Activated B cell treated with CpG ODN at 0.5 μM for 24 hours (primary cell): ENCODE measurements at regions of chr4 and their contacts with region 1.

Region 1: GRCh38 chr4:26319467-26319948 is 1.3 kb upstream of the RBPJ start:
- DNase-seq: peak; percentile 88
- ATAC-seq: peak; percentile 72
- H3K4me3 Mint-ChIP-seq: peak overlapping the region; percentile 99
- H3K27ac Mint-ChIP-seq: peak overlapping the region; percentile 99
- H3K4me1 Mint-ChIP-seq: peaks cover 35% of the 10 kb centered on the region
- H3K27me3 Mint-ChIP-seq: no peaks in the 10 kb centered on the region
- CTCF ChIP-seq: no peak

Region 2: GRCh38 chr4:24519649-24520048 is 1799.9 kb before region 1 on chr4:
- CTCF ChIA-PET with region 1: no interaction called
- POLR2A ChIA-PET with region 1: no interaction called
- intact Hi-C with region 1: no loop called
- DNase-seq: no peak
- ATAC-seq: no peak
- H3K4me3 Mint-ChIP-seq: no peak overlapping the region
- H3K27ac Mint-ChIP-seq: no peak overlapping the region
- H3K4me1 Mint-ChIP-seq: no peaks in the 10 kb centered on the region
- H3K27me3 Mint-ChIP-seq: no peaks in the 10 kb centered on the region
- CTCF ChIP-seq: no peak

Region 3: DNA sequence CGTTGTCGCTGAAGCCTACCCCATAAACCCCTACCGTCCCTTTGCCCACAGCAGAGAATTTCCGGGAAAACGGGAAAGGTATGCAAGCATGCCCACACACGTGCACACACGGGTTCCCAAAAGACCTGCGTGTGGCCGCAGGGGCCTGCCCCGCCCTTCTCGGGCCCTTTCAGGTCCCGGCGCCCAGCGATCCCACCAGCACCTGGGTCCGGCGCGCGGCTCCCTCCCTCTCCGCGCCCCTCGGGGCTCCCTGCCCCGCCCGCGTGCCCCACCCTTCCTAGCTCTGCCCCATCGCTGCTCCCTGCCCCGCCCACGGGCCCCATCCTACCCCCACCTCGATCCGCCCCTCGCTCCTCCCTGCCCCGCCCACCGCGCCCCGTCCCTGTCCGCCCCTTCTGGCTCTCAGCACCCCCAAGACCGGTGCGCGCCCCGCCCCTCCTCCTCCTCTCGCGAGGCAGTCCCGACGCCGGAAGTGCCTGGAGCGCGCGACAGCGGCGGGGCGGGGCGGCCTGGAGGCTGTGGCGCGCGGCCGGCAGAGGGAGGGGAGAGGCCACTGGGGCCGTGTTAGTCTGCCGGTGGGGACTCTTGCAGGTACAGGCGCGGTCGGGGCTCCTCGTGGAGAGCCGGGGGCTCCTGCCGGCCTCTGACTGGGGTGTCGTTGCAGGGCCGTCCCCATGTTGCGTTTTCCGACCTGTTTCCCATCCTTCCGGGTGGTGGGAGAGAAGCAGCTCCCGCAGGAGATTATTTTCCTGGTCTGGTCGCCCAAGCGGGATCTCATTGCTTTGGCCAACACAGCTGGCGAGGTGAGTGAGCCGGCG is 942.5 kb before region 1 on chr4 and contains the start of gene ANAPC4:
- CTCF ChIA-PET with region 1: no interaction called
- POLR2A ChIA-PET with region 1: no interaction called
- intact Hi-C with region 1: loop called (anchors 2 kb)
- DNase-seq: peak; percentile 95
- ATAC-seq: peak; percentile 94
- H3K4me3 Mint-ChIP-seq: no peak within 1 kb of the TSS
- H3K27ac Mint-ChIP-seq: peak within 1 kb of the TSS; percentile 81
- H3K4me1 Mint-ChIP-seq: peaks cover 5% of the 10 kb centered on the region
- H3K27me3 Mint-ChIP-seq: no peaks in the 10 kb centered on the region
- CTCF ChIP-seq: no peak
- total RNA-seq, gene ANAPC4: 36.8 and 37.0 TPM in 2 replicates

Region 4: GRCh38 chr4:25723409-25723808 is 596.1 kb before region 1 on chr4:
- CTCF ChIA-PET with region 1: no interaction called
- POLR2A ChIA-PET with region 1: no interaction called
- intact Hi-C with region 1: no loop called
- DNase-seq: no peak
- ATAC-seq: no peak
- H3K4me3 Mint-ChIP-seq: no peak overlapping the region
- H3K27ac Mint-ChIP-seq: no peak overlapping the region
- H3K4me1 Mint-ChIP-seq: peaks cover 13% of the 10 kb centered on the region
- H3K27me3 Mint-ChIP-seq: no peaks in the 10 kb centered on the region
- CTCF ChIP-seq: no peak

Region 5: DNA sequence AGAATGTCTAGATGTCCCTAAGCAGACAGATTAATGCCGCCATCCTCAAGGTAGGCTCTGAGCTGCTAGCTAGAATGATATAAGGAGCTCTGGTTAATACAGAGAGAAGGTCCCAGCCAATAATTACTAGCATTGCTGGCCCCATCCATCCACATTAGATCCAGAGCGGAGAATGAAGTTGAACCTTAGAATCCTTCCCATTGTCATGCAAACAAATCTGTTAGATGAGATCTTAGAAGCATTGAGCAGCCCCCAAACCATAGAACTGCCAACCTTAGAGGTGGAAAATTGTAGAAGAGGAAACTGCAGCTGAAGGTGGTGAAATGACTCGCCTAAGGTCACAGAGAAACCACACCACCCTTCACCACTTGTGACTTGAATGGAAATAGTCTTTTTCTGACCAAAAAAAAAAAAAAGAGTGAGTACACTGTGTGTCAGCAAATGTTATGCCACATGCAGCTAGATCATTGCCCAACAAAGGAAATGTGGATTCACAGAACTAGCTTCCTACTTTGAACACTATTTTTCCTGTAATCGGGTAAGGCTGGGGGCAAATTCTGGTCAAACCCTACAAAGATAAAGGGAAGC is 243.4 kb before region 1 on chr4:
- CTCF ChIA-PET with region 1: interaction called, 3 read pairs
- POLR2A ChIA-PET with region 1: interaction called, 4 read pairs
- intact Hi-C with region 1: loop called (anchors 1 kb)
- DNase-seq: no peak
- ATAC-seq: peak; percentile 54
- H3K4me3 Mint-ChIP-seq: no peak overlapping the region
- H3K27ac Mint-ChIP-seq: peak overlapping the region; percentile 57
- H3K4me1 Mint-ChIP-seq: peaks cover 30% of the 10 kb centered on the region
- H3K27me3 Mint-ChIP-seq: no peaks in the 10 kb centered on the region
- CTCF ChIP-seq: no peak

Region 6: GRCh38 chr4:26217961-26218676 is 101.4 kb before region 1 on chr4:
- CTCF ChIA-PET with region 1: no interaction called
- POLR2A ChIA-PET with region 1: no interaction called
- intact Hi-C with region 1: loop called (anchors 2 kb)
- DNase-seq: no peak
- ATAC-seq: peak; percentile 79
- H3K4me3 Mint-ChIP-seq: peak overlapping the region; percentile 36
- H3K27ac Mint-ChIP-seq: peak overlapping the region; percentile 55
- H3K4me1 Mint-ChIP-seq: peaks cover 17% of the 10 kb centered on the region
- H3K27me3 Mint-ChIP-seq: peaks cover 9% of the 10 kb centered on the region
- CTCF ChIP-seq: no peak

Region 7: GRCh38 chr4:26583865-26584652 is 264.6 kb after region 1 on chr4 and contains the start of gene TBC1D19:
- CTCF ChIA-PET with region 1: no interaction called
- POLR2A ChIA-PET with region 1: interaction called, 10 read pairs
- intact Hi-C with region 1: loop called (anchors 2 kb)
- DNase-seq: peak; percentile 82
- ATAC-seq: peak; percentile 96
- H3K4me3 Mint-ChIP-seq: peak within 1 kb of the TSS; percentile 96
- H3K27ac Mint-ChIP-seq: peak within 1 kb of the TSS; percentile 93
- H3K4me1 Mint-ChIP-seq: peaks cover 24% of the 10 kb centered on the region
- H3K27me3 Mint-ChIP-seq: peaks cover under 1% of the 10 kb centered on the region
- CTCF ChIP-seq: no peak
- total RNA-seq, gene TBC1D19: 5.2 and 6.7 TPM in 2 replicates

Region 8: GRCh38 chr4:26992657-26993361 is 673.3 kb after region 1 on chr4:
- CTCF ChIA-PET with region 1: no interaction called
- POLR2A ChIA-PET with region 1: no interaction called
- intact Hi-C with region 1: loop called (anchors 1 kb)
- DNase-seq: peak; percentile 26
- ATAC-seq: peak; percentile 80
- H3K4me3 Mint-ChIP-seq: no peak overlapping the region
- H3K27ac Mint-ChIP-seq: no peak overlapping the region
- H3K4me1 Mint-ChIP-seq: peaks cover 17% of the 10 kb centered on the region
- H3K27me3 Mint-ChIP-seq: no peaks in the 10 kb centered on the region
- CTCF ChIP-seq: no peak